ENCODE measurements at regions of chr17 and their contacts with region 1.

Region 1: DNA sequence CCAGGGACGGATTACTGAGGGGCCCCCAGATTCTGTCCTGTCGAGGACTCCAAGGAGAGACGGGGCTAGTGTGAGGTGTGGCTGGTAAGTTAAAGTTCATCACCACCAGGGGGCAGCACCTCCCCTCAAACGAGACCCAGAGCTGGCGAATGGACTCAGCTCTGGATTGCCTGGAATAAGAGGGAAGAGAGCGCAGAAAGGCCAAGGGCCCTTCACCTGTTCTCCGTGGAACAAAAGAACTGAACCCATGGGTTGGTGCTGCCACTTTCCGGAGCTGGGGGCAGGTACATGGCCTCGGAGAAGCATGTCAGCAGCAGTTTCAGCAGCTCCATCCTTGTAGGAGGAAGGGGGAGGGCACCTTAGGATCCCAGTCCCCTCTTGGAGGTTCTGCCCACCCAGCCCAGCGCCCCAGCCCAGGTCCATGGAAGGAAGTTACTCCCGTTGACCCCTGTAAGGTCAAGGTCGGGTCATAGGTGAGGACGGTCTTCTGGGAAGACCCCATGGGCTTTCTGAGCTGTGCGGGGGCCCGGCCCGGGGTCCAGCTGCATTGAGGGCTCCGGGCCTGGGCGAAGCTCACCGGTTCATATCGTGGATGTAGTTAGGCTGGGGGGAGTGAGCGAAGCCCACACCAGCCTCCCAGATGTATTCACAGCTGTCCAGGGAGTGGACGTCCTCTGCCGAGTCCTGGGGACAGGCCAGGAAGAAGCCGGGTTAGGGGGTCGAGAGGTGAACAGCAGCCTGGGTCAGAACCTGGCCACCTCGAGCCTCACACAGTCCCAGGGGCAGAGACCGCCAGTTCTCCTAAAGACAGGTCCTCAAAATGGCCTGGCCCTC is 10.7 kb downstream of the HID1 start:
- DNase-seq: peak; percentile 70 to 97
- H3K4me3 ChIP-seq: no peak overlapping the region
- H3K27ac ChIP-seq: no peak overlapping the region
- H3K4me1 ChIP-seq: peaks cover 0 to 7% (median 1%) of the 10 kb centered on the region in 4 experiments; a peak in 4 of 7 replicates
- H3K27me3 ChIP-seq: peaks cover 0 to 5% (median 2%) of the 10 kb centered on the region in 4 experiments; a peak in 3 of 7 replicates
- CTCF ChIP-seq: peak; percentile 79 to 83 (median 82)
- EP300 ChIP-seq: no peak
- POLR2A ChIP-seq: no peak
- RAD21 ChIP-seq: peak; percentile 88 to 91

Region 2: GRCh38 chr17:74659898-74660297 is 302.0 kb before region 1 on chr17:
- CTCF ChIA-PET with region 1: no interaction called
- POLR2A ChIA-PET with region 1: no interaction called
- DNase-seq: no peak
- H3K4me3 ChIP-seq: no peak overlapping the region
- H3K27ac ChIP-seq: no peak overlapping the region
- H3K4me1 ChIP-seq: 0 out of 7 replicates have a peak, but pooled peaks cover 0 to 2% (median 0%) of the 10 kb centered on the region in 4 experiments
- H3K27me3 ChIP-seq: no peaks in the 10 kb centered on the region
- CTCF ChIP-seq: no peak
- EP300 ChIP-seq: no peak
- POLR2A ChIP-seq: no peak
- RAD21 ChIP-seq: no peak

Region 3: DNA sequence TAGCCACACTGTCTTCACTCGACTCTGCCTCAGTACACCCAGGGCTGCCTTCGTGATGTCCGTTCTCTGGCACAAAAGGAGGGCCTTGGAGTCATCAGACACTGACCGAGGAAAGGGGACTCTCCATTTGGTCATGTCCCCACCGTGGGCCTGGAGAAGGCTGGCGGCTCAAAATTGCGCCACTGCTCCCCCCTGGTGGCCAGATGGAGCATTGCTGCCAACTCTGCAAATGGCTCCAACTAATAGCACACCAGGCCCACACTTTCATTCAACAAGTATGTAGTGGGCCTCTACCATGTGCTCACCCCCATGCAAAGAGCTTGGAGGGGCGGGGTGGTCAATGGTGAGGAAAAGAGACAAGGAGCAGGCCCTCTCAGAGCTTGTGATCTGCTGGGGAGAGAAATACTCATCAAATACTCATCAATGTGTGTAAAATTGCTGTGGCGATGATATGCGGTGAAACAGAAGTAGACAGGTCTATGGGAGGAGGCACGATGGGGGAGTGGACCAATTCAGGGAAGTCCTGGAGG is 96.9 kb before region 1 on chr17:
- CTCF ChIA-PET with region 1: interaction called, 55 read pairs
- POLR2A ChIA-PET with region 1: no interaction called
- DNase-seq: peak in 1 of 2 experiments; percentile 95
- H3K4me3 ChIP-seq: no peak overlapping the region
- H3K27ac ChIP-seq: no peak overlapping the region
- H3K4me1 ChIP-seq: peaks cover 0 to 7% (median 5%) of the 10 kb centered on the region in 4 experiments; a peak in 4 of 7 replicates
- H3K27me3 ChIP-seq: peaks cover 21 to 23% (median 21%) of the 10 kb centered on the region in 4 experiments
- CTCF ChIP-seq: peak; percentile 92 to 97 (median 96)
- EP300 ChIP-seq: no peak
- POLR2A ChIP-seq: no peak
- RAD21 ChIP-seq: peak; percentile 81 to 86

Region 4: DNA sequence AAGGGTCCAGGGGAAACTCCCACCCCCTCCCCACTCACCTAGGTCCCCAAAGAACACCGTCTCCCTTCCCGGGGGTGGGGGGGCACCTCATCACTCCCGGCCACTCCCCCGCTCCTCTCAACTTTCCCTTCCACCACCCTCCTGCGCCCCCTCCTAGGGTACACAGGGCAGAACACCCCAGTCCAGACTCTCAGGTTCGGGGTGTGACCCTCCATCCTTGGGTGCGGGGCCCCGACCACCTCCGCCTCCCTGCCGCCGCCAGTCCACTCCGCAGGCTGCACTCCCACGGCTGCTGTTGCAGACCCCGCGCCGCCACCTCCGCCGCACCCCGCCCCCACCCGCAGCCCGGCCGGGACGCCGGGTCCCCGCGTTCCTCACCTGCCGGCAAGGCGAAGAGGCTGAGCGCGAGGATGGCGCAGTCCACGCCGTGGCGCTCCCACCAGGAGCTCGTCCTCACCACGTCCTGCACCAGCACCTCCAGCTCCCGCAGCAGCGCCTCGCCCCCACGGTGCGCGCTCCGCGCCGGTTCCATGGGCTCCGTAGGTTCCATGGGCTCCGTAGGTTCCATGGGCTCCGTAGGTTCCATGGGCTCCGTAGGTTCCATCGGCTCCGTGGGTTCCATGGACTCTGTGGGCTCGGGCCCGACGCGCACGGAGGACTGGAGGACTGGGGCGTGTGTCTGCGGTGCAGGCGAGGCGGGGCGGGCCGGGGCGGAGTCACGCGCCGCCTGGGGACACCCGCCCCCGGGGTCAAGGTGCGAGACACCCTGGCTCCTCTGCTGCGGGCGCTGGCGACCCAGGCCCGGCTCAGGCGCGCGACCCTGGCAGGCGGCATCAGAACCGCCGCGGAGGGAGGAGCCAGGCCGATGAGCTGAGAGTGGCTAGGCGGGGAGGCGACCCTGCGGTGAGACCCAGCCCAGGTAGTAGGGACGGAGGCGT is 68.6 kb before region 1 on chr17 and contains the start of gene FADS6:
- CTCF ChIA-PET with region 1: interaction called, 12 read pairs
- POLR2A ChIA-PET with region 1: no interaction called
- DNase-seq: no peak
- H3K4me3 ChIP-seq: peak within 1 kb of the TSS; percentile 61 to 75 (median 64)
- H3K27ac ChIP-seq: no peak within 1 kb of the TSS
- H3K4me1 ChIP-seq: peaks cover 0 to 10% (median 4%) of the 10 kb centered on the region in 4 experiments; a peak in 4 of 7 replicates
- H3K27me3 ChIP-seq: peaks cover 16 to 43% (median 37%) of the 10 kb centered on the region in 4 experiments; a peak in 6 of 7 replicates
- CTCF ChIP-seq: no peak
- EP300 ChIP-seq: no peak
- POLR2A ChIP-seq: no peak
- RAD21 ChIP-seq: no peak
- total RNA-seq, gene FADS6: 0.56 and 0.80 TPM in 2 replicates

Region 5: DNA sequence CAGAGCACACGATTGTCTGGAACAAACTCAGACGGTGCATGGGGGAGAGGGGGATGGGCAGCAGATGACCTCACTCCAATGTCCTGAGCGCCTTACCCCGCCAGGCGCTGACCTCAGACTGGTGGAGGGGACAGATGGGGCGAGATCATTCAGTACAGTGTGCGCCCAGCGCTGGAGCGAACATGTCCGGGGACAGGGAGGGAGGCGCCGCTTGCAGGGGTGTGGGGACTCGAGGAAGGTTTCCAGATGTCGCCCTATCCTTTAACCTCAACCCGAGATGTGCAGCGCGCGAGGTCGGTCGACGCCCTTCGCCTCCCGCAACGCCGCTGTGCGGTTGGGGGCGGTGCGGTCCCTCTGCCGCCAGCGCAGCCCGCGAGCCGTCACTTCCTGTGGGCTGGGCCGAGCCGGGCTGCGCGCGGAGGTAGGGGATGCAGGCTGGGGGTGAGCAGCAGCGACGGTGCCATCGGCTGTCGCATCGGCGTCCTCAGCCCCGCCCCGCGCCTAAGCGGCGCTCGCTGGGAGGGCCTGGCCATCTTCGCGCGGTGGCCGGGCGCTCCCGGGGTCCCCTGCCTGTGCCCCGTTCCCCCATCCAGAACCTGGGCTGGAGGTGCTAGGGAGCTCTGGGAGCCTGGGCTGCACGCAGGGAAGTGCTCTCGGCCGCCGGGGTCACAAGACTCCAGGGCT is 20.2 kb after region 1 on chr17:
- CTCF ChIA-PET with region 1: interaction called, 59 read pairs
- POLR2A ChIA-PET with region 1: interaction called, 5 read pairs
- DNase-seq: peak in 1 of 2 experiments; percentile 87
- H3K4me3 ChIP-seq: peak overlapping the region; percentile 70 to 90 (median 76)
- H3K27ac ChIP-seq: peak overlapping the region; percentile 55; the same call in 1 of the 2 replicates
- H3K4me1 ChIP-seq: peaks cover 4 to 8% (median 7%) of the 10 kb centered on the region in 4 experiments
- H3K27me3 ChIP-seq: peaks cover 0 to 2% (median 1%) of the 10 kb centered on the region in 4 experiments; a peak in 2 of 7 replicates
- CTCF ChIP-seq: peak in 1 of 3 experiments; percentile 11; a peak in 1 of 4 replicates
- EP300 ChIP-seq: peak in 1 of 2 experiments; percentile 46; a peak in 1 of 3 replicates
- POLR2A ChIP-seq: peak; percentile 94 to 97
- RAD21 ChIP-seq: no peak

Region 6: DNA sequence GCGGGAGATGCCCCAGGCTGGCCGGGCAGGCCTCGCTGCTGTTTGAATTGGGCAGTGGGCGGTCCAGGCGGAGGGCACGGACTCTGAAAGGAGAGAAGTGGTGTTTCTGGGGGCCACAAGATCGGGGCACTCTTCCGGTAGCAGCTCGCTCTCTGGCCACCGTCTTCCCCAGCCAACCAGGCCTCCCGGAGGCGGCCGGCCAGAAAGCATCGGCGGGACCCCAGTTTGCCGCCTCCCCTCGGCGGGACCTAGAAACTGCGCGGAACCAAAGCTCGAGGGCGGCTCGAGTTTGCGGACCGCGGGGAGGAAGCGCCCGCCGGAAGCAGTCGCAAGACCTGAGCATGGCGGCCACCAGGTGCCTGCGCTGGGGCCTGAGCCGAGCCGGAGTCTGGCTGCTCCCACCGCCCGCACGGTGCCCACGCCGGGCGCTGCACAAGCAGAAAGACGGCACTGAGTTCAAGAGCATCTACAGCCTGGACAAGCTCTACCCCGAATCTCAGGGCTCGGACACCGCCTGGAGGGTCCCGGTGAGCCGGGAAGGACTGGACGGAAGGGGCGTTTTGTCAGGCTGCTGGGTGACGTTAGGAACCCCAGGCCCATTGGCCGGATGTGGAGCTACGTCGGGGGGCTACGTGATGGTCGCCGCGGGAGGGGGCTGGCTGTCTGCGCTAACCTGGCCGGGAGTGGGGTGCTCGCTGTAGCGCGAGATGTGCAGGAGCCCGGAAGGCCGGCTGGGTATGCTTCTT is 50.6 kb after region 1 on chr17 and contains the start of gene MRPL58:
- CTCF ChIA-PET with region 1: interaction called, 345 read pairs
- POLR2A ChIA-PET with region 1: interaction called, 37 read pairs
- DNase-seq: peak; percentile 80 to 93
- H3K4me3 ChIP-seq: peak within 1 kb of the TSS; percentile 73 to 84 (median 79)
- H3K27ac ChIP-seq: peak within 1 kb of the TSS; percentile 87
- H3K4me1 ChIP-seq: peaks cover 0 to 15% (median 4%) of the 10 kb centered on the region in 4 experiments; a peak in 5 of 7 replicates
- H3K27me3 ChIP-seq: no peaks in the 10 kb centered on the region
- CTCF ChIP-seq: peak in 2 of 3 experiments; percentile 36 to 38; a peak in 3 of 4 replicates
- EP300 ChIP-seq: peak in 1 of 2 experiments; percentile 60; a peak in 1 of 3 replicates
- POLR2A ChIP-seq: peak; percentile 84 to 96
- RAD21 ChIP-seq: peak in 1 of 2 experiments; percentile 38; a peak in 3 of 4 replicates
- total RNA-seq, gene MRPL58: 48.5 and 49.1 TPM in 2 replicates

Region 7: GRCh38 chr17:75069783-75070182 is 107.9 kb after region 1 on chr17:
- CTCF ChIA-PET with region 1: interaction called, 21 read pairs
- POLR2A ChIA-PET with region 1: no interaction called
- DNase-seq: no peak
- H3K4me3 ChIP-seq: no peak overlapping the region
- H3K27ac ChIP-seq: no peak overlapping the region
- H3K4me1 ChIP-seq: no peaks in the 10 kb centered on the region; a peak in 1 of 7 replicates
- H3K27me3 ChIP-seq: no peaks in the 10 kb centered on the region
- CTCF ChIP-seq: peak in 2 of 3 experiments; percentile 6 to 7; a peak in 2 of 4 replicates
- EP300 ChIP-seq: no peak
- POLR2A ChIP-seq: no peak
- RAD21 ChIP-seq: no peak